HCT116 (cell line): ENCODE measurements at regions of chr3 and their contacts with region 1.

Region 1: DNA sequence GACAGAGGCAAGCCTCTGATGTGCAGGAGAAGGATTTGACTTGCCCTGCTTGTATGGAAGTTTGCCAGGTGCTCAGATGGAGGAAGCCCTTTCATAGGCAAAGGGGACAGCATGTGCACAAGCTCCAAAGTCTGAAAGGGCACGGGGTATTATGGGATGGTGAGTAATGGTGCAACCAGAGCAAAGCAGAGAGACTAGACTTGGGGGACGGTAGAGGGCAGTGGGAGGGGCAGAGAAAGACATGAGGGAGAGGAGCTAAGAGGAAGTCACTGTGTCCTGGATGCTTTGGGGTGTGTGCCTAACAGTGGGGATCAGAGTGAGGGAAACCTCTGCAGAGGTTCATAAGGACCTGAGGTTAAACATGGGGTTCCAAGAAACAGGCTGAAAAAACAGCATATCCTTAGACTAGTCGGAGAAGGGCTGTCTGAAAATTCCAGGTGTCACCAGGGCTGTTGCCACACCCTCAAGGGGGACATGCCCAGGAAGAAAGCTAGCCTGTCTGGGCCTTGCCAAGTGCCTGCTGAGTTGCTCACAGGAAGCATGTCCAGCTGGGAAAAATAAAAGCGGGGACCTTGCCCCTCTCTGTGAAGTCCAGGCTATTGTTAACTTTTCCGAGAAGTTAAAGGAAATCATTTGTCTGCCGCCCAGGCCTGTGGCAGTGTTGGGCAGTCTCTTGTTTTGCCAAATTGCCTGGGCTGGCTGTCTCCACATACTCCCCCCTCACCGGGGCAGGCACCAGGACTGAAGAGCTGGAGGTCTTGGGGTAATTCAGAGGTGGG is 47.1 kb downstream of the HRH1 start:
- DNase-seq: no peak
- ATAC-seq: peak; percentile 76
- H3K4me3 ChIP-seq: no peak overlapping the region; a peak in 1 of 4 replicates
- H3K27ac ChIP-seq: peak overlapping the region; percentile 6; the same call in 1 of the 2 replicates
- H3K4me1 ChIP-seq: peaks cover 13 to 39% of the 10 kb centered on the region in 2 experiments
- H3K27me3 ChIP-seq: no peaks in the 10 kb centered on the region
- CTCF ChIP-seq: no peak
- POLR2A ChIP-seq: no peak
- RAD21 ChIP-seq: no peak; the same call in 1 of the 2 replicates

Region 2: GRCh38 chr3:10758304-10759061 is 443.0 kb before region 1 on chr3:
- CTCF ChIA-PET with region 1: no interaction called
- POLR2A ChIA-PET with region 1: no interaction called
- RAD21 ChIA-PET with region 1: no interaction called
- intact Hi-C with region 1: loop called (anchors 10 kb)
- DNase-seq: peak; percentile 51
- ATAC-seq: peak; percentile 97
- H3K4me3 ChIP-seq: no peak overlapping the region
- H3K27ac ChIP-seq: no peak overlapping the region
- H3K4me1 ChIP-seq: no peaks in the 10 kb centered on the region
- H3K27me3 ChIP-seq: peaks cover 37% of the 10 kb centered on the region
- CTCF ChIP-seq: peak; percentile 48 to 94 (median 64); a peak in 5 of 6 replicates
- POLR2A ChIP-seq: no peak
- RAD21 ChIP-seq: peak; percentile 93

Region 3: DNA sequence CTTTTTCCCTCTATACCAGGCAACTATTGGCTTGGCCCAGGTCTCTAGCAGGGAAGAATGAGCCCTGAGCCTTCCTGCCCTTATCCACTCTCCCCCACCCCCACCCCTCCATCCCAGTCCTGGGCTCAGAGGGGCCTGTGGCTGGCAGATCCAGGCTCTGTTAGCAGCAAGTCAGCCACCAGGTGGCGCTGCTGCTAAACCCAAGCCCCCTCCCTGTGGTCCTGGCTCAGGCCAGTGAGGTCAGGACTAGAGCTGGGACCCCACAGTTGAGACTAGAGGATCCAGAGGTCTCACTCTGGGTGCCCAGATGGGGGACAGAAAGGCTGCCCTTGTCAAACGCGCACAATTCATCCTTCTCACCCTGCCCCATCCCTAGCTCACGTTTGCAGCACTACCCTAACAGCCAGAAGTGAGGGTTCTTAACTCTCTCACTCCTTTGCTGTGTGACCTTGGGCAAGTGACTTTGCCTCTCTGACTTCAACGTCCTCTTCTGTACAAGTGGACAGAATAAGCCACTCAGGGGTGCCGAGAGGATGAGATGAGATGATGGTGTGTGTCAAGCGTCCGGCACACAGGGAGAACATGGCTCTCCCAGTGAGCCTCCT is 255.7 kb before region 1 on chr3:
- CTCF ChIA-PET with region 1: no interaction called
- POLR2A ChIA-PET with region 1: no interaction called
- RAD21 ChIA-PET with region 1: no interaction called
- intact Hi-C with region 1: loop called (anchors 10 kb)
- DNase-seq: peak; percentile 44
- ATAC-seq: peak; percentile 99
- H3K4me3 ChIP-seq: no peak overlapping the region
- H3K27ac ChIP-seq: no peak overlapping the region
- H3K4me1 ChIP-seq: no peaks in the 10 kb centered on the region
- H3K27me3 ChIP-seq: no peaks in the 10 kb centered on the region; the same call in 1 of the 2 replicates
- CTCF ChIP-seq: peak; percentile 79 to 96 (median 88)
- POLR2A ChIP-seq: no peak
- RAD21 ChIP-seq: peak; percentile 83

Region 4: GRCh38 chr3:11096266-11097135 is 104.9 kb before region 1 on chr3:
- CTCF ChIA-PET with region 1: interaction called, 10 read pairs
- POLR2A ChIA-PET with region 1: no interaction called
- RAD21 ChIA-PET with region 1: no interaction called
- intact Hi-C with region 1: no loop called
- DNase-seq: peak; percentile 74
- ATAC-seq: peak; percentile 88
- H3K4me3 ChIP-seq: peak overlapping the region; percentile 44 to 56
- H3K27ac ChIP-seq: peak overlapping the region; percentile 76
- H3K4me1 ChIP-seq: peaks cover 22 to 32% of the 10 kb centered on the region in 2 experiments; a peak in 3 of 4 replicates
- H3K27me3 ChIP-seq: no peaks in the 10 kb centered on the region
- CTCF ChIP-seq: no peak; a peak in 1 of 6 replicates
- POLR2A ChIP-seq: no peak
- RAD21 ChIP-seq: no peak

Region 5: DNA sequence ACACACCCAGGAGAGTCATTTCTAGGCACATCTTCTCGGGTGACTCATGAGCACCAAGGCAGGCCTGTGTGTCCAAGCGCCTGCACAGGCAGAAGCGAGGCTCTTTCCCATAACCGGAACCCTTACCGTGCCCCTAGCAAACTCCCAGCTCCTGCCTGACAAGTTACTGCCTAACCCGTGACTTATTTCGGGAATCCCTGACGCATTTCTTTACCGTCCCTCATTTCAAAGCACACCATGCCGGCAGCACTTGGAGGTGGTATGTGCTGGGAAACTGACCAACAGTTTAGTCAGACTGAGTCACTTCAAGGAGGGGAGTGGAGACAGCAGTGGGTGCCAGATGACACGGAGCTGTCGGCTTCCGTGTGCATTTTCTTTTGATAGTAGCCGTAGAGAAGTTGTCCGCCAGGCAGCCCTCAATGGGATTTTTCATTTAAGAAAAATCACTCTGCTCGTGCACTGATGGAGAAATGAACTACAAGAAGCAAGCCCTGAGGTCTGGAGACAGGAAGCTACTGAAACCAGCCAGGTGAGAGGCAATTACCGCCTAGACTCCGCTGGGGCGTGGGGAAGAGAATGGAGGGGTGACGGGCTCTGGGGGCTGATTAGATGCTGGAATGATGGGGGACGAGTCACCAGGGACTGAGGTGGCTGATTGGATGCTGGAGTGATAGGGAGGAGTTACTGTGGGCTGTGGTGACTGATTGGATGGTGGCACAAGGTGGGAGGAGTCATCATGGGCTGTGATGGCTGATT is 64.4 kb before region 1 on chr3:
- CTCF ChIA-PET with region 1: interaction called, 3 read pairs
- POLR2A ChIA-PET with region 1: no interaction called
- RAD21 ChIA-PET with region 1: no interaction called
- intact Hi-C with region 1: loop called (anchors 5 kb)
- DNase-seq: peak; percentile 100
- ATAC-seq: peak; percentile 89
- H3K4me3 ChIP-seq: peak overlapping the region; percentile 55 to 59
- H3K27ac ChIP-seq: peak overlapping the region; percentile 93
- H3K4me1 ChIP-seq: peaks cover 37 to 60% of the 10 kb centered on the region in 2 experiments
- H3K27me3 ChIP-seq: no peaks in the 10 kb centered on the region
- CTCF ChIP-seq: no peak
- POLR2A ChIP-seq: peak; percentile 20
- RAD21 ChIP-seq: no peak

Region 6: DNA sequence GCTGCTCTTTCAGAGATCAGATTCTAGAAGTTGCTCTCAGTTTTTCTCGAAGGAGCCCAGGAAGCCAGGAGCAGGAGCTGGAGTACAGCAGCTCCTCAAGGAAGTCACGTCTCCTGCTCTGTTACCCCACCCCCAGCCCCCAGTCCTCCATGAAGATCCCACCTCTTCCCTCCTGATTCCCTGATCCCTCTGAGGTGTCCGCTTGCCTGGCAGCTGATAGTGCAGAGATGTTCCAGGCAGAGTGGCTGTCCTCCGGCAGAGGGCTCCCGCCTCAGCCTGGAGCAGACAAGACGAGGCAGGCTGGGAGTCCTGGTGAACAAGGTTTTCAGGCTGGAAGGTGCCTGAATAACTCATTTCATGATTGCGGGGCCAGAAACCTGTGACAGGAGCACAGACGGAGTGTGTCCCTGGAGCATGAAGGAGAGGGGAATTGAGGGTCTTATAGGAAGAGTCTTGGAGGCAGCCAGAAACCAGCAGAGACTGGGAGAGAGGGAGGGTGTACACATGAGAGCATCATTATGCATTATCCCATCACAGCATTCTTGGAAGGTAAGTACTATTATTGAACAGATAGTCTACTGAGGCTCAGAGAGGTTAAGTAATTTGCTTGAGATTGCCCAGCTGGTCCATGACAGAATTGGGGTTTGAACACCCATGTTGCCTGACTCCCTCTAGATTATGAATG is 46.0 kb before region 1 on chr3:
- CTCF ChIA-PET with region 1: interaction called, 4 read pairs
- POLR2A ChIA-PET with region 1: no interaction called
- RAD21 ChIA-PET with region 1: interaction called in 1 of 2 experiments, 5 read pairs
- intact Hi-C with region 1: loop called (anchors 1 kb)
- DNase-seq: peak; percentile 47
- ATAC-seq: peak; percentile 90
- H3K4me3 ChIP-seq: peak overlapping the region; percentile 48 to 77
- H3K27ac ChIP-seq: no peak overlapping the region; the same call in 1 of the 2 replicates
- H3K4me1 ChIP-seq: peaks cover 10 to 37% of the 10 kb centered on the region in 2 experiments; a peak in 3 of 4 replicates
- H3K27me3 ChIP-seq: no peaks in the 10 kb centered on the region
- CTCF ChIP-seq: peak; percentile 81 to 89 (median 85)
- POLR2A ChIP-seq: no peak
- RAD21 ChIP-seq: peak; percentile 87

Region 7: DNA sequence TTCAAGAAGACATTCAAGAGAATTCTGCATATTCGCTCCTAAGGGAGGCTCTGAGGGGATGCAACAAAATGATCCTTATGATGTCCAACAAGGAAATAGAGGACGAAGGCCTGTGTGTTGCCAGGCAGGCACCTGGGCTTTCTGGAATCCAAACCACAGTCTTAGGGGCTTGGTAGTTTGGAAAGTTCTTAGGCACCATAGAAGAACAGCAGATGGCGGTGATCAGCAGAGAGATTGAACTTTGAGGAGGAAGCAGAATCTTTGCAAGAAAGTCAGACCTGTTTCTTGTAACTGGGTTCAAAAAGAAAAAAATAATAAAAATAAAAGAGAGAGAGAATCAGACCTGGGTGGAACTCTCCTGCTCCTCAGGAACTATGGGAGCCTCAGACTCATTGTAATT is 59.0 kb after region 1 on chr3:
- CTCF ChIA-PET with region 1: no interaction called
- POLR2A ChIA-PET with region 1: no interaction called
- RAD21 ChIA-PET with region 1: no interaction called
- intact Hi-C with region 1: no loop called
- DNase-seq: no peak
- ATAC-seq: no peak
- H3K4me3 ChIP-seq: no peak overlapping the region
- H3K27ac ChIP-seq: no peak overlapping the region
- H3K4me1 ChIP-seq: no peaks in the 10 kb centered on the region
- H3K27me3 ChIP-seq: no peaks in the 10 kb centered on the region
- CTCF ChIP-seq: no peak
- POLR2A ChIP-seq: no peak
- RAD21 ChIP-seq: no peak

Region 8: DNA sequence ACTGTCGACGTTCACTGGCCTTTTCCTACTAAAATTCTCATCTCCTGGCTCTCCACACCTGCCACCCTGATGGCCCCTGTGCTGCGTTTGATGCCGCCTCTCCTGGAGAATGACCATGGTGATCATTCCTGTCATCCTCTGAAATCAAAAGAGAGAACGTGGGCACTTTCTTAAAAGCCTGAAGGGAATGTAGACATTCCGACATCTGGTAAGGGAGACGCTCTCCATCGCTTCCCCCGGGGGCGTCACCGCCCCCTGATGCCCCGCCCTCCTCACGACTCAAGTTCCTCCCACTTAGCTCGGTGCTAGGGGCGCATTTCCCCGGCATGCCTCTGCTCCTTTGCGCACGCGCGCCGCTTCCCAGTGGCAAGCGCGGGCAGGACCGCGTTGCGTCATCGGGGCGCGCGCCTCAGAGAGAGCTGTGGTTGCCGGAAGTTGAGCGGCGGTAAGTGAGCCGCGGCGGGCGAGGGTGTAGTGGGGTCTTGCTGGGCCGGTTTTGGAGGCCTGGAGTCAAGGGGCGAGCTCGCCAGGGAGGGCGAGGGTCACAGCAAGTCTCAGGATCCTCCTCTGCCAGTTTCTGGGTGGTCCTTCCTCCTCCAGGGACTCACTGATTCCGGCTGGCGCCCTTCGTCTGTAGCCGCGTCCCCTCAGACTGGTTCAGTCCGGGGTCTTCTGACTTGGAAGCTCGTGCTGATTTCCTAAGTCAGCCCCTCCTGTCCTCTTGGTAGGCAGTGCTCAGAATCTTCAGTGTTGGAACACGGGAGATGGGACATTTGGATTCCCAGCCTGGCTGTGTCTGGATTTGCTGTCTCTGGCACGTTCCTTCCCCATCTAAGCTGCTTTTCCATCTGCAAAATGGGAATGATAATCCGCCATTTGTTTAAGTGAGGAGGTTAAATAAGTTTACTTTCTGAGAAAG is 70.8 kb after region 1 on chr3 and contains the start of gene ATG7:
- CTCF ChIA-PET with region 1: no interaction called
- POLR2A ChIA-PET with region 1: no interaction called
- RAD21 ChIA-PET with region 1: no interaction called
- intact Hi-C with region 1: no loop called
- DNase-seq: peak; percentile 87
- ATAC-seq: peak; percentile 98
- H3K4me3 ChIP-seq: peak within 1 kb of the TSS; percentile 75 to 100
- H3K27ac ChIP-seq: peak within 1 kb of the TSS; percentile 57
- H3K4me1 ChIP-seq: peaks cover 4 to 15% of the 10 kb centered on the region in 2 experiments; a peak in 3 of 4 replicates
- H3K27me3 ChIP-seq: no peaks in the 10 kb centered on the region
- CTCF ChIP-seq: no peak
- POLR2A ChIP-seq: no peak
- RAD21 ChIP-seq: no peak
- total RNA-seq, gene ATG7: 29.3 TPM

Region 9: DNA sequence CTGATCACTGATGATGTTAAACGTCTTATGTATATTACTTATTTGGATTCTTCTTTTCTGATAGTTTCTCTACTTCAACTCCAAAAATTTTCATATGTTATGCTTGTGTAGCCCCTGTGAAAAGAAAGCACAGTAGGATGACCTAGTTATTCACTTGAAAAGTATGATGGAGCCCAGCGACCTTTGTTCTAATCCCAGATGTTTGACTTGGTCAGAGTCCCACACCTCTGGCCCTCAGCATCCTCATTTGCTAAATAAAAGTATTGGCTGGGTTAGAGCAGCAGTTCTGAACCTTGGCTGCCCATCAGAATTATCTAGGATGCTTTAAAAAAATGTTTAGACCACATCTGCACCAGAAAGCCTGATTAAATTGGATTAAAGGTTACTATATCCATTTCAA is 244.4 kb after region 1 on chr3:
- CTCF ChIA-PET with region 1: no interaction called
- POLR2A ChIA-PET with region 1: no interaction called
- RAD21 ChIA-PET with region 1: no interaction called
- intact Hi-C with region 1: no loop called
- DNase-seq: no peak
- ATAC-seq: no peak
- H3K4me3 ChIP-seq: no peak overlapping the region
- H3K27ac ChIP-seq: no peak overlapping the region
- H3K4me1 ChIP-seq: no peaks in the 10 kb centered on the region
- H3K27me3 ChIP-seq: no peaks in the 10 kb centered on the region
- CTCF ChIP-seq: no peak
- POLR2A ChIP-seq: no peak
- RAD21 ChIP-seq: no peak